Mammary epithelial cell (primary cell): ENCODE measurements at regions of chrX and their contacts with region 1.

Region 1: GRCh38 chrX:45011131-45011530 is 138.1 kb downstream of the KDM6A start:
- DNase-seq: peak; percentile 66
- H3K4me3 ChIP-seq: no peak overlapping the region
- H3K27ac ChIP-seq: peak overlapping the region; percentile 32
- H3K4me1 ChIP-seq: peaks cover 23% of the 10 kb centered on the region
- H3K27me3 ChIP-seq: no peaks in the 10 kb centered on the region
- CTCF ChIP-seq: no peak

Region 2: DNA sequence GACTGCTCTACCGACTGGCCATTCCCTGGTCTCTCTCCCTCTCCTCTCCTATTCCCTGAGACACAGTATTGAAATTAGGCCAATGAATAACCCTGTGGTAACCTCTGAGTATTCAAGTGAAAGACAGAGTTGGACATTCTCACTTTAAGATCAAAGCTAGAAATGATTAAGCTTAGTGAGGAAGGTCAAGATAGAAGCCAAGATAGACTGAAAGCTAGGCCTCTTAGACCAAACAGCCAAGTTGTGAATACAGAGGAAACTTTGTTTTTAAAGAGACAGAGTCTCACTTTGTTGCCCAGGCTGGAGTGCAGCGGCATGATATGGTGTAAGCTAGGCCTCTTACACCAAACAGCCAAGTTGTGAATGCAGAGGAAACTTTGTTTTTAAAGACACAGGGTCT is 73.5 kb before region 1 on chrX:
- CTCF ChIA-PET with region 1: interaction called, 4 read pairs
- dilution Hi-C with region 1: no loop called
- in situ Hi-C with region 1: no loop called
- intact Hi-C with region 1: loop called (anchors 10 kb)
- DNase-seq: no peak
- H3K4me3 ChIP-seq: no peak overlapping the region
- H3K27ac ChIP-seq: no peak overlapping the region
- H3K4me1 ChIP-seq: peaks cover 13% of the 10 kb centered on the region
- H3K27me3 ChIP-seq: no peaks in the 10 kb centered on the region
- CTCF ChIP-seq: no peak

Region 3: DNA sequence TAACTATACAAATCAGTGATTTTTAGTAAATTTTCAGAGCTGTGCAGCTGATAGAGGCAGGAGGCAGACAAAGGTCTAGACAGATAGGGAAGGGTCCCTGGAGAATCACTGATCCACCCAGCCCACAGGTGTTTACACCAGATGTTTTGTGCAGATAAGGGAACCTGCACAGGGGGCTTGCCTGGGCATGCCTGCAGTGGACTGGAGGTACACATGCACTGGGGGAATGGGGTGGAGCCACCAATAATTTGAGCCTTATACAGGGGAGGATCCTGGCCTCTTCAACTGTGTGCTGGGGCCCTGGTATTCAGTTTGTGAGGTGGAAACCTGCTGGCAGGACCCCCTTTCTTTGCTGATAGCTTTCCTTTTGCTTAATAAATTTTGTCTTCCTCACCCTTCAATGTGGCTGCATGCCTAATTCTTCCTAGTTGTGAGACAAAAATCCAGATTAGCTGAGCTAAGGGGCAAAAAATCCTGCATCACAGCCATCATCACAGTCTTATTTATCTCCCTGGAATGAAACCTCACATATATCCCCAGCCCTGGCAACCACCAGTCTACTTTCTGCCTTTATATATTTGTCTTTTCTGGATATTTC is 35.4 kb before region 1 on chrX:
- CTCF ChIA-PET with region 1: no interaction called
- dilution Hi-C with region 1: no loop called
- in situ Hi-C with region 1: no loop called
- intact Hi-C with region 1: loop called (anchors 5 kb)
- DNase-seq: peak; percentile 63
- H3K4me3 ChIP-seq: no peak overlapping the region
- H3K27ac ChIP-seq: peak overlapping the region; percentile 67
- H3K4me1 ChIP-seq: peaks cover 22% of the 10 kb centered on the region
- H3K27me3 ChIP-seq: no peaks in the 10 kb centered on the region
- CTCF ChIP-seq: no peak